Sigmoid colon (tissue), 7 donors: ENCODE measurements at regions of chr16 and their contacts with region 1.

Region 1: DNA sequence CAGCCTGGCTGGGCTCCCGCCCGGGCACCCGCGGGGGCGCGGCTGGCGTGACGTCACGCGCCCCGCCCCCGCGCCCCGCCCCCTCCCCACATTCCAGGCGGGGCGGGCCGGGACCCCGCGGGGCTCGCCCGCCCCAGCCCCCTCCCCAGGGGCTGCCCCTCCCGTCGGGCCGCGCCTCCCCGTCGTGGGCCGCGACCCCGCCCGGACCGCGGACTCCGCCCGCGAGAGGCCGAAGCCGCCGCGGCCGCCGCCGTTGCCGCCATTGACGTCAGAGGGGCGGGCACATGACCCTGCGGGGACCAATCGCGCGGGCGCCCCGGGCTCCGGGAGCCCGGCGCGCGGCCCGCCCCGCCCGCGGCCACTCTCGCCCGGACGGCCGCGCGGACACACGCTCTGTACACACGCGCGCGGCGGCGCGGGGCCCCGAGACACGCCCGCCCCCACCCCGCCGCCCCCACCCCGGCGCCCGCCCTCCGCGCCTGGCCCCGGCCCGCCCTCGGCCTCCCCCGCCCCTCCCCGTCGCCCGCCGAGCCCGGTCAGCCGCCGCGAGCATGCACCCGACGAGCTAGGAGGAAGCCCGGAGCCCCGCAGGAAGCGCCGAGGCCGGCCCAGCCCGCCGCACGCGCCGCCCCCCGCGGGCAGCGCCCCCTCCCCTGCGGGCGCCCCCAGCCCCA is at the start of gene CMIP:
- DNase-seq: peak; percentile 93
- H3K4me3 ChIP-seq: peak within 1 kb of the TSS; percentile 84 to 94 (median 92)
- H3K27ac ChIP-seq: peak within 1 kb of the TSS; percentile 79 to 87 (median 84)
- H3K4me1 ChIP-seq: peaks cover 0 to 76% (median 54%) of the 10 kb centered on the region in 4 donors
- H3K27me3 ChIP-seq: no peaks in the 10 kb centered on the region
- CTCF ChIP-seq: no peak
- EP300 ChIP-seq: no peak
- POLR2A ChIP-seq: no peak
- total RNA-seq, gene CMIP: 11.0 to 30.3 (median 15.9) TPM

Region 2: GRCh38 chr16:81526935-81527334 is 82.3 kb after region 1 on chr16:
- intact Hi-C with region 1: loop called (anchors 5 kb)
- DNase-seq: no peak
- H3K4me3 ChIP-seq: no peak overlapping the region
- H3K27ac ChIP-seq: peak overlapping the region; percentile 39 to 64 (median 50)
- H3K4me1 ChIP-seq: peaks cover 0 to 19% (median 14%) of the 10 kb centered on the region in 4 donors
- H3K27me3 ChIP-seq: no peaks in the 10 kb centered on the region
- CTCF ChIP-seq: no peak
- EP300 ChIP-seq: no peak
- POLR2A ChIP-seq: no peak

Region 3: DNA sequence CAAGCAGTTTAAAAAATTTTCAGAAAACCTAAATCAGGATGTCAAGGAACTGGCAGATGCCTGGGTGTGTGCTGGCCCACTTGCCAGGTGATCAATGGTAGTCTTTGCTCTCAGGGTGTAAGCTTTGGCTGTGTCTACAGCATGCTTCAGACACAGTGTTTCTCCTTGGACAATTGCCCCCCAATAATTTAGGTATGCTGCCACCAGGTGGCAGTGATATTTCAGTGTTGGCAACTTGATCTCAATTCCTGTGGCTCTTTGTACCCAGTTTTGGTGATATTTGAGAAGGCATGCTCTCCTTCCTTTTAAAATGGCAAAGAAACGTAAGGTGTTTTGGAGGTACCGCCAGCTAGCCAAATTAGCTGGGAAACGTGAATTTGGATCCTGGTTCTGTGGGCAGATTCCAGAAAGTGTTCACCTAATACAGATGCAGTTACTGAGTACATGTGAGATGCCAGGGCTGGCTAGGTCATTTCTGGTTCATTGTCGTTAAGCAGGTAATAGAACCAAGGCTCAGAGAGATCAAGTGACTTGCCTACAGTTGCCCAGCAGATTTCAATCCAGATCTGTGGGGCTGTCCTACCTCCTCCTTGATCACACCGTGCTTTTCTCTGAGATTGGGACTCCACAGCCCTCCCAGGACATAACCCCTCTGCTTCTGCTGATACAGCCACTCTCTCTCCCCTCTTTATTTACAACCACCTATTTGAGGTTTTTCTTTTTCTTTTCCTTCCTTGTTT is 178.9 kb after region 1 on chr16:
- intact Hi-C with region 1: loop called (anchors 5 kb)
- DNase-seq: no peak
- H3K4me3 ChIP-seq: no peak overlapping the region
- H3K27ac ChIP-seq: no peak overlapping the region
- H3K4me1 ChIP-seq: peaks cover 0 to 36% (median 21%) of the 10 kb centered on the region in 4 donors
- H3K27me3 ChIP-seq: no peaks in the 10 kb centered on the region
- CTCF ChIP-seq: peak; percentile 32 to 76 (median 58)
- EP300 ChIP-seq: no peak
- POLR2A ChIP-seq: no peak

Region 4: DNA sequence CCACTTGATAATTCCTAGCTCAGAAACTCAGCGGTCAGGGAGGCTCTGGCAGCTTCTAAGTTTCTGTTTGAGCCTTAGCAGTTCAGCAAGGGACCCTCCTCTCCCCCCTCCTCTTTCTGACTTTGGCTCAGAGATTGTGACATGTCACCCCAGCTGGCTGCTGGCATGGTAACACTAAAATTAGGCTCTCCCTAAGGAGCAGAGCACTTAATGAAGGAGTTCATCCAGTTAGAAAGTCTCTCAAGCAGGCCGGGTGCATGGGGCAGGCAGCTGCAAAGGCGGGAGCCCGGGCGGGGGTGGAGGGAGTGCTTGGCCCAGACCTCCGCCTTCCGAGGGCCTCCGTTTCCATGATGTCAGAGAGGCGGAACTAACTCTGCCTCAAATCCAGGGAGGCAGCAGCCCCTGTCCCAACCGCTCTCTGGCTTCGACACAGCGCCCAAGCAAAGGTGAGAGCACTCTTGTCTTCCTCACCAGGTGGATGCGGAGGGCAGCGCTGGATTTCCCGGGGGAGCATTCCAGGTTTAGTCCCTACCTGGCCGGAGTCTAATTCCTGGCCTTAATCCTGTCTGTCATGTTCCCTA is 206.5 kb after region 1 on chr16:
- intact Hi-C with region 1: loop called (anchors 5 kb)
- DNase-seq: peak; percentile 95
- H3K4me3 ChIP-seq: peak overlapping the region in 3 of 4 donors; percentile 24 to 45 (median 35)
- H3K27ac ChIP-seq: peak overlapping the region; percentile 45 to 90 (median 82)
- H3K4me1 ChIP-seq: peaks cover 0 to 86% (median 60%) of the 10 kb centered on the region in 4 donors
- H3K27me3 ChIP-seq: no peaks in the 10 kb centered on the region
- CTCF ChIP-seq: no peak
- EP300 ChIP-seq: peak in 1 of 4 donors; percentile 8
- POLR2A ChIP-seq: peak in 1 of 2 donors; percentile 32

Region 5: GRCh38 chr16:81711657-81712319 is 267.2 kb after region 1 on chr16:
- intact Hi-C with region 1: loop called (anchors 5 kb)
- DNase-seq: peak; percentile 81
- H3K4me3 ChIP-seq: no peak overlapping the region
- H3K27ac ChIP-seq: peak overlapping the region in 3 of 4 donors; percentile 65 to 75 (median 73)
- H3K4me1 ChIP-seq: peaks cover 2 to 66% (median 55%) of the 10 kb centered on the region in 4 donors
- H3K27me3 ChIP-seq: no peaks in the 10 kb centered on the region
- CTCF ChIP-seq: no peak
- EP300 ChIP-seq: peak in 2 of 4 donors; percentile 73 to 88
- POLR2A ChIP-seq: no peak

Region 6: GRCh38 chr16:81723098-81723723 is 278.6 kb after region 1 on chr16:
- intact Hi-C with region 1: loop called (anchors 5 kb)
- DNase-seq: no peak
- H3K4me3 ChIP-seq: no peak overlapping the region
- H3K27ac ChIP-seq: peak overlapping the region in 1 of 4 donors; percentile 66
- H3K4me1 ChIP-seq: peaks cover 0 to 29% (median 21%) of the 10 kb centered on the region in 4 donors
- H3K27me3 ChIP-seq: no peaks in the 10 kb centered on the region
- CTCF ChIP-seq: peak; percentile 68 to 77 (median 72)
- EP300 ChIP-seq: no peak
- POLR2A ChIP-seq: no peak